GM12878 (cell line): ENCODE measurements at regions of chr12 and their contacts with region 1.

Region 1: GRCh38 chr12:29317556-29318363 is 63.2 kb downstream of the ERGIC2 start:
- DNase-seq: peak; percentile 52
- ATAC-seq: peak; percentile 100
- H3K4me3 ChIP-seq: no peak overlapping the region
- H3K27ac ChIP-seq: no peak overlapping the region
- H3K4me1 ChIP-seq: no peaks in the 10 kb centered on the region
- H3K27me3 ChIP-seq: no peaks in the 10 kb centered on the region
- CTCF ChIP-seq: peak; percentile 80 to 100 (median 97); a peak in 5 of 6 replicates
- EP300 ChIP-seq: no peak
- POLR2A ChIP-seq: no peak
- RAD21 ChIP-seq: peak; percentile 84

Region 2: DNA sequence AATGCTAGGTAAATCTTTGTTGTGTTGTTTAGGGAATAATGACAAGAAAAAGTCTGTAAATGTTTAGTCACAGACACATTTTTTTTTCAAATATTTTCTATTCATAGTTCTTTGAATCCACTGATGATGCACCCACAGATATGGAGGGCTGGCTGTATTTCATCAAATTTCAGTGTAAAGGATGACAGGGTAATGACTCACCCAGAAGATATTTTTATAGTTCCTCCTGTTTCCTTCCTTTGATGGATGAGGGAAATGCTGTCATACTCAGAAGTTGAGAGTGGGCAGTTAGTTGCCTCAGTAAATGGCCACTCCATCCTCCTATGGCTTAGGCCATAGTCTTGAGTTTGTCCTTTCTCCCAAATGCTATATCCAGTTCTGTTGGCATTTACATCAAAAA is 1698.5 kb before region 1 on chr12:
- CTCF ChIA-PET with region 1: no interaction called
- POLR2A ChIA-PET with region 1: no interaction called
- RAD21 ChIA-PET with region 1: no interaction called
- SMC1A ChIA-PET with region 1: no interaction called
- in situ Hi-C with region 1: no loop called
- intact Hi-C with region 1: no loop called
- DNase-seq: no peak
- ATAC-seq: no peak
- H3K4me3 ChIP-seq: no peak overlapping the region
- H3K27ac ChIP-seq: no peak overlapping the region
- H3K4me1 ChIP-seq: no peaks in the 10 kb centered on the region
- H3K27me3 ChIP-seq: no peaks in the 10 kb centered on the region
- CTCF ChIP-seq: no peak
- EP300 ChIP-seq: no peak
- POLR2A ChIP-seq: no peak
- RAD21 ChIP-seq: no peak

Region 3: DNA sequence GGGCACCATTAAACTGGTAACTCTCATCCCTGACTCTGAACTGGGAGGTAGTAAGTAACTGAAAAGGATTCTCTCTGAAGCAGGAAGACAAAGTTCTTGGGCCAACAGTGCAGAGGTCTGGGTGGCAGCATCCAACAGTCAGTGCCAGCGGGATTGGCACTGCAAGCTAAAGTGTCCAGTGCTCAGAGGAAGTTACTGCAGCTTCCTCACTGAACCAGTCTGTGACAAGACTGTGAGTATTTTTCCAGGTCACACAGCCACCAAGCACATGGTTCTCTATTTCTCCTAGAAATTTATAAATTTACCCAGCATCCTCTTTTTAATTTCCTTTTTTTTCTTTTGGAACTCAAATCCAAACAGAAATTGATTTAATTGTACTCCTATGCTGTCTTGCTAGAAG is 250.3 kb before region 1 on chr12:
- CTCF ChIA-PET with region 1: interaction called, 56 read pairs
- POLR2A ChIA-PET with region 1: interaction called, 3 read pairs
- RAD21 ChIA-PET with region 1: interaction called, 37 read pairs
- SMC1A ChIA-PET with region 1: interaction called, 47 read pairs
- in situ Hi-C with region 1: no loop called
- intact Hi-C with region 1: no loop called
- DNase-seq: no peak
- ATAC-seq: no peak
- H3K4me3 ChIP-seq: no peak overlapping the region
- H3K27ac ChIP-seq: no peak overlapping the region
- H3K4me1 ChIP-seq: no peaks in the 10 kb centered on the region
- H3K27me3 ChIP-seq: no peaks in the 10 kb centered on the region; a peak in 1 of 4 replicates
- CTCF ChIP-seq: no peak
- EP300 ChIP-seq: no peak
- POLR2A ChIP-seq: no peak
- RAD21 ChIP-seq: no peak

Region 4: GRCh38 chr12:29073628-29074239 is 244.0 kb before region 1 on chr12:
- CTCF ChIA-PET with region 1: interaction called, 56 read pairs
- POLR2A ChIA-PET with region 1: no interaction called
- RAD21 ChIA-PET with region 1: interaction called, 37 read pairs
- SMC1A ChIA-PET with region 1: interaction called, 47 read pairs
- in situ Hi-C with region 1: loop called (anchors 5 kb)
- intact Hi-C with region 1: loop called (anchors 1 kb)
- DNase-seq: no peak
- ATAC-seq: peak; percentile 87
- H3K4me3 ChIP-seq: no peak overlapping the region
- H3K27ac ChIP-seq: no peak overlapping the region
- H3K4me1 ChIP-seq: no peaks in the 10 kb centered on the region
- H3K27me3 ChIP-seq: no peaks in the 10 kb centered on the region
- CTCF ChIP-seq: peak; percentile 54 to 68 (median 67); a peak in 5 of 6 replicates
- EP300 ChIP-seq: no peak
- POLR2A ChIP-seq: no peak
- RAD21 ChIP-seq: peak; percentile 68

Region 5: DNA sequence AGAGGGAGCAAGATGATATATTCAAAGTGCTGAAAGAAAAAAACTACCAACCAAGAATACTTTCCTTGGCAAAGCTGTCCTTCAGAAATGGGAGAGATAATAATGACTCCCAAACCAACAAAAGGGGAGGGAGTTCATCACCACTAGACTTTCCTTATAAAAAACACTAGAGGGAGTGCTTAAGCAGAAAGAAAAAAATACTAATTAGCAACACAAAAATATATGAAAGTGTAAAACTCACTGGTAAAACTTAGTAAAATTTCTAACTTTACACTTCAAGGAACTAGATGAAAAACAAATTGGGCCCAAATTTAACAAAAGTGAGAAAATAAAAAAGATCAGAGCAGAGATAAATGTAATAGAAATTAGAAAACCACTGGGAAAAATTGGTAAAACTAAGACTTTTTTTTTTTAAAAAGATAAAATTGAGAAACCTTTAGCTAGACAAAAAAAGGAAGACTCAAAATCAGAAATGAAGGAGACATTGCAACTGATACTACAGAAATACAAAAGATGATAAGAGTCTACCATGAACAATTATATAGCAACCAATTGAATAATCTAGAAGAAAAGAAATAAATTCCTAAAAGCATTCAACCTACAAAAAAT is 229.0 kb before region 1 on chr12:
- CTCF ChIA-PET with region 1: interaction called, 129 read pairs
- POLR2A ChIA-PET with region 1: no interaction called
- RAD21 ChIA-PET with region 1: interaction called, 71 read pairs
- SMC1A ChIA-PET with region 1: interaction called, 71 read pairs
- in situ Hi-C with region 1: no loop called
- intact Hi-C with region 1: loop called (anchors 5 kb)
- DNase-seq: no peak
- ATAC-seq: 0 out of 3 replicates have a peak, but pooled peaks have one; percentile 21
- H3K4me3 ChIP-seq: no peak overlapping the region
- H3K27ac ChIP-seq: no peak overlapping the region
- H3K4me1 ChIP-seq: peaks cover 6% of the 10 kb centered on the region; the same call in 1 of the 2 replicates
- H3K27me3 ChIP-seq: no peaks in the 10 kb centered on the region
- CTCF ChIP-seq: peak; percentile 27 to 35 (median 35); a peak in 3 of 6 replicates
- EP300 ChIP-seq: no peak
- POLR2A ChIP-seq: no peak
- RAD21 ChIP-seq: peak; percentile 61

Region 6: DNA sequence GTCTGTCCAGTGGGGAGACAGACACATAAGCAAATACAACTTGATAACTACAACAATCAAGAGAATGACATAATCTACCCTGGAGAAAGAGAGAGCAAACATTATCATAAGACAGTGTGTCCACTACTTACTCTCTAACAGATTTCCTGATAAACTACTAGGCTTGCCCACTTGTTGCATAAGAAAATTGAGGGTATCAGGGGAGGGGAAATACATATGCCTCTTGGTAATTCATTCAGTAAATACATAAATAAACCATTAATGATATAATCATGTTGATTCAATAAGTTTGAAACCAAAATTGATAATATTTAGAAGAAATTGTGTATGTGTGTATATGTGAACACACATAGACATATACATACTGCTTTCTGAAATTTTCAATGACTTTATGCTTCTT is 13.4 kb before region 1 on chr12:
- CTCF ChIA-PET with region 1: interaction called, 24 read pairs
- POLR2A ChIA-PET with region 1: no interaction called
- RAD21 ChIA-PET with region 1: interaction called, 8 read pairs
- SMC1A ChIA-PET with region 1: interaction called, 3 read pairs
- in situ Hi-C with region 1: no loop called
- intact Hi-C with region 1: no loop called
- DNase-seq: no peak
- ATAC-seq: no peak
- H3K4me3 ChIP-seq: no peak overlapping the region
- H3K27ac ChIP-seq: no peak overlapping the region
- H3K4me1 ChIP-seq: no peaks in the 10 kb centered on the region
- H3K27me3 ChIP-seq: no peaks in the 10 kb centered on the region
- CTCF ChIP-seq: no peak
- EP300 ChIP-seq: no peak
- POLR2A ChIP-seq: no peak
- RAD21 ChIP-seq: no peak

Region 7: DNA sequence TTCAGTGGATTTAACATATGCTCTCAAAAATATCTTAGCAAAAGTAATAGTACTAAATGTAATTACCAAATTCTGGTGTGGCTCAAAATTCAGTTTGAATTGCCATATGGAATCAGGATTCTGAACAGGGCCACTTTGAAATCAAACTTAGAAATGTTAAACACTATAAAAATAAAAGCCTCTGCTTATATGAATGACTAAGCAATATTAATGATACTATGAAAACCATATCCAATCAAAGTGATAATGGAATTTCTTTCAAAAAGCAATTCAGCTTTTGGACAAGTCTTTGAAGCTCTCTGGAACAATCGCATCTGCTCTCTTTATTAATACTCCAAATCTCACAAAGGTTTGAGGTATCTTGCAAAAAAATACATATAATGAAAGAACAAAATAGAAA is 11.7 kb after region 1 on chr12:
- CTCF ChIA-PET with region 1: interaction called, 15 read pairs
- POLR2A ChIA-PET with region 1: no interaction called
- RAD21 ChIA-PET with region 1: no interaction called
- SMC1A ChIA-PET with region 1: interaction called, 3 read pairs
- in situ Hi-C with region 1: no loop called
- intact Hi-C with region 1: no loop called
- DNase-seq: no peak
- ATAC-seq: no peak
- H3K4me3 ChIP-seq: no peak overlapping the region
- H3K27ac ChIP-seq: no peak overlapping the region
- H3K4me1 ChIP-seq: no peaks in the 10 kb centered on the region
- H3K27me3 ChIP-seq: no peaks in the 10 kb centered on the region
- CTCF ChIP-seq: no peak
- EP300 ChIP-seq: no peak
- POLR2A ChIP-seq: no peak
- RAD21 ChIP-seq: no peak

Region 8: DNA sequence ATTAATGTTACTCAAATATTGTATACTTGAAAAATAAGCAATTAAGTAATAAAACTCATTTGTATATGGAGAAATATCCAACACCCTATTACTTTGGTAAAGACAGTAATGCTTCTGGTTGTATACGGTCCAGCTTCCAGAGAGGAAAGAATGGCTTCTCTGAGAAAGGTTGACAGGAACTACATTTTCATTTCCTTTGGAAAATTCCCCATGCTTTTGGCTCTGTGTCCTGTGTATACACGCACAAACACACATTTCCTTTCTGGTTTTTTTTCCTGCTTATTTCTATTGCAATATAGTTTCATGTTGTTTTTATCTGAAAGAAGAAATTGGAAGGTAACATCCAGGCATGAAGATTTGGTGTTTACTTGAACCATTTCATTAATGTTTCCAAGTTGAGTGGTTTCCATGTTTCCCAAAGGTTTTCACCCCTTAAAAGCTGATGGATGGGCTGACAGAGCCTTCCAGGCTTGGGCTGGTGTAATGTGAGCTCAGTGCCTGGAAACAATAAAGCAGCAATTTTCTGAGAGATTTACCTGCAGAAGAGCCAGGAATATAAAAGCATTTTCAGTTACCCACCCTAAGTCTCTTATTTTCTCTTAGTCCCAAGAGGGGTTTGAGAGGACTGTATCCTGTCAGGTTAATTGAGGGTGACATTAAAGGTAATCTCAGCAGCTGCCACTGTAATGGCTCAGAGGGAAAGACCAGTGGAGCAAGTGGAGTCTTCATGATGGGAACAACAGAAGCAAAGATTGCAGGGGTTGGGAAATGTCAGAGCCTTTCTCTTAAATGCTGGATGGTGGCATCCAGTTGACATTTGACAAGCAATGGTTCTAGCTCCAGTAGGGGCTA is 499.3 kb after region 1 on chr12:
- CTCF ChIA-PET with region 1: no interaction called
- POLR2A ChIA-PET with region 1: no interaction called
- RAD21 ChIA-PET with region 1: no interaction called
- SMC1A ChIA-PET with region 1: no interaction called
- in situ Hi-C with region 1: no loop called
- intact Hi-C with region 1: no loop called
- DNase-seq: no peak
- ATAC-seq: no peak
- H3K4me3 ChIP-seq: no peak overlapping the region
- H3K27ac ChIP-seq: no peak overlapping the region
- H3K4me1 ChIP-seq: no peaks in the 10 kb centered on the region
- H3K27me3 ChIP-seq: no peaks in the 10 kb centered on the region
- CTCF ChIP-seq: no peak
- EP300 ChIP-seq: no peak
- POLR2A ChIP-seq: no peak
- RAD21 ChIP-seq: no peak